BJ (cell line): ENCODE measurements at regions of chr6 and their contacts with region 1.

Region 1: DNA sequence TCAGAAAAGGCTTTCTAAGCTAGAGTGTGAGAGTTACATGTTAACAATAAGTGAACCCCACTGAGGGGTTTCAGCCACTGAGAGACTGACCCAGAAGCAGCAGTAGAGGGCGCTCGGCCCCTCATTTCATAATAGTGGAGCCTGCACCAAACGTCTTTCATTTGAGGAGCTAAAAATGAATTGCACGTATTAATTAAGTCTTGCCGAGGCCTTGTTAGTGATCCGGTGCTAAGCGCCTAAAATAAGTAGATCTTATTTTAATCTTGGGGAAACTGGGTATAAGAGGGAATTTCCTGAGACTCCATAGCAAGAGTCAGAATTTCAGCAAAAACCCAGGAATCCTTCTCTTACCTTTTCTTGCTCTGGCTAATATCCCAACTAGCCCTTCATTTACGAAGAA is 209.7 kb downstream of the FARS2 start:
- DNase-seq: no peak
- H3K4me3 ChIP-seq: no peak overlapping the region
- H3K27me3 ChIP-seq: no peaks in the 10 kb centered on the region
- CTCF ChIP-seq: peak; percentile 95

Region 2: DNA sequence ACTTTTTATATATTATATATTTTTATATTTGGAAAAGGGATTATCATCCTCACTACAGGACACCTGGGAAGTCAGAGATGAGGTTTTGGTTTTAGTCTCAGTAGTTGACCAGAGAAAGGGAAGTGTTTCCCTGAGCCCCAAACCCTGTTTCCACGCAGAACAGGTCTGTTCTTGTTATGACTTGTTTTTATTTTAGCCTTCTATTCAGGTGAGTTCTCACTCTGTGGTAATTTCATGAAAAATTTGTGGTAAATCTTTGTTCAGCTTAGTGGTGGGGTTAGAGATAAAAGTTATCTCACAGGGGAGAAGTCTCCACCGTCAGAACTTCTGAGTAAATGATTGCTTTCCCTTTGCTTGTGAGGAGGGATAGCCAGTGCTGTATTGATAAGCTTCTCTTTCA is 15.2 kb after region 1 on chr6:
- CTCF ChIA-PET with region 1: interaction called, 30 read pairs
- POLR2A ChIA-PET with region 1: no interaction called
- DNase-seq: no peak
- H3K4me3 ChIP-seq: no peak overlapping the region
- H3K27me3 ChIP-seq: no peaks in the 10 kb centered on the region
- CTCF ChIP-seq: no peak

Region 3: GRCh38 chr6:6547110-6547879 is 1076.3 kb after region 1 on chr6:
- CTCF ChIA-PET with region 1: interaction called, 10 read pairs
- POLR2A ChIA-PET with region 1: no interaction called
- DNase-seq: peak; percentile 5
- H3K4me3 ChIP-seq: peak overlapping the region; percentile 17; the same call in 1 of the 2 replicates
- H3K27me3 ChIP-seq: no peaks in the 10 kb centered on the region
- CTCF ChIP-seq: peak; percentile 81